ENCODE measurements at regions of chr1 and their contacts with region 1.

Region 1: GRCh38 chr1:155308493-155309422 is at the start of gene FDPS:
- DNase-seq: peak; percentile 96 to 99 (median 98)
- H3K4me3 ChIP-seq: peak within 1 kb of the TSS; percentile 92 to 97
- H3K4me3 Mint-ChIP-seq: peak within 1 kb of the TSS; percentile 92 to 99 (median 97)
- H3K27ac ChIP-seq: peak within 1 kb of the TSS; percentile 90
- H3K27ac Mint-ChIP-seq: peak within 1 kb of the TSS; percentile 88 to 99 (median 98)
- H3K4me1 ChIP-seq: peaks cover 22% of the 10 kb centered on the region
- H3K4me1 Mint-ChIP-seq: peaks cover 18 to 44% (median 25%) of the 10 kb centered on the region in 4 donors
- H3K27me3 ChIP-seq: no peaks in the 10 kb centered on the region
- H3K27me3 Mint-ChIP-seq: peaks cover 0 to 2% of the 10 kb centered on the region in 2 donors
- total RNA-seq, gene FDPS: 82.8 to 91.3 TPM

Region 2: GRCh38 chr1:155193275-155193990 is 115.3 kb before region 1 on chr1:
- CTCF ChIA-PET with region 1: no interaction called
- POLR2A ChIA-PET with region 1: interaction called, 3 read pairs
- intact Hi-C with region 1: loop called (anchors 5 kb)
- DNase-seq: peak; percentile 60 to 72 (median 62)
- H3K4me3 ChIP-seq: peak overlapping the region; percentile 58 to 73
- H3K4me3 Mint-ChIP-seq: peak overlapping the region; percentile 87 to 97 (median 92)
- H3K27ac ChIP-seq: peak overlapping the region; percentile 67
- H3K27ac Mint-ChIP-seq: peak overlapping the region; percentile 91 to 99 (median 98)
- H3K4me1 ChIP-seq: peaks cover 27% of the 10 kb centered on the region
- H3K4me1 Mint-ChIP-seq: peaks cover 19 to 38% (median 24%) of the 10 kb centered on the region in 4 donors
- H3K27me3 ChIP-seq: no peaks in the 10 kb centered on the region
- H3K27me3 Mint-ChIP-seq: no peaks in the 10 kb centered on the region

Region 3: GRCh38 chr1:155261852-155262673 is 46.7 kb before region 1 on chr1 and contains the start of gene SCAMP3:
- CTCF ChIA-PET with region 1: interaction called, 5 read pairs
- POLR2A ChIA-PET with region 1: interaction called, 9 read pairs
- intact Hi-C with region 1: loop called (anchors 1 kb)
- DNase-seq: peak; percentile 82 to 94 (median 84)
- H3K4me3 ChIP-seq: peak within 1 kb of the TSS; percentile 94
- H3K4me3 Mint-ChIP-seq: peak within 1 kb of the TSS; percentile 95 to 100 (median 99)
- H3K27ac ChIP-seq: peak within 1 kb of the TSS; percentile 86
- H3K27ac Mint-ChIP-seq: peak within 1 kb of the TSS; percentile 86 to 99 (median 97)
- H3K4me1 ChIP-seq: peaks cover 23% of the 10 kb centered on the region
- H3K4me1 Mint-ChIP-seq: peaks cover 12 to 40% (median 30%) of the 10 kb centered on the region in 4 donors
- H3K27me3 ChIP-seq: no peaks in the 10 kb centered on the region
- H3K27me3 Mint-ChIP-seq: no peaks in the 10 kb centered on the region
- total RNA-seq, gene SCAMP3: 94.4 to 101 TPM

Region 4: DNA sequence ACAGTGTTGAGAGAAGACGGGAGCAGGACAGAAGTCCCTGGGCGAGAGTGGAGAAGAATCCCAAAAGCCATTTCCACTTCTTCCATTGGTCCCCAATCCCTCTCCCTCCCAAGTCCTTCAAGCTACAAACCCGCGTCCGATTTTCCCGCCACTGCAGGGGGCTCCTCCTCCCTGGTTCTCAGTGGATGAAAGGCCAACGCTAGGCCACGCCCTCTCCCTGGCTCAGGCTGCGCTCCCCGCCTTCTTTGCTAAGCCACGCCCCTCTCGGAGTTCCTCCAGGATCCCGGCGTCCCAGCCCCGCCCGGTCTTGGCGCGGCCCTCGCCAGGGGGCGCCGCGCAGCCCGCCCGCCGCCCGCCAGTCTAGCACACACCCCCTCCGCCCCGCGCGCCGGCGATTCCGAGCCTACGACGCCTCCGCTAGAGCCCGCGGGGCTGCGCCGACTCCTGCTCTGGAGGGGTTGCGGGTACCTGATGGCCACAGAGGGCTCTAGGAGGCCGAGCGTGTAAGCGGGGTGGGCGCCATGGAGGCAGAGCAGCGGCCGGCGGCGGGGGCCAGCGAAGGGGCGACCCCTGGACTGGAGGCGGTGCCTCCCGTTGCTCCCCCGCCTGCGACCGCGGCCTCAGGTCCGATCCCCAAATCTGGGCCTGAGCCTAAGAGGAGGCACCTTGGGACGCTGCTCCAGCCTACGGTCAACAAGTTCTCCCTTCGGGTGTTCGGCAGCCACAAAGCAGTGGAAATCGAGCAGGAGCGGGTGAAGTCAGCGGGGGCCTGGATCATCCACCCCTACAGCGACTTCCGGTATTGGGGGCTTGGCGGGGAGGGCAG is 31.5 kb before region 1 on chr1 and contains the start of gene HCN3:
- CTCF ChIA-PET with region 1: interaction called, 6 read pairs
- POLR2A ChIA-PET with region 1: interaction called, 14 read pairs
- intact Hi-C with region 1: loop called (anchors 1 kb)
- DNase-seq: peak; percentile 80 to 90 (median 81)
- H3K4me3 ChIP-seq: peak within 1 kb of the TSS; percentile 62 to 81
- H3K4me3 Mint-ChIP-seq: peak within 1 kb of the TSS; percentile 78 to 86 (median 83)
- H3K27ac ChIP-seq: peak within 1 kb of the TSS; percentile 55
- H3K27ac Mint-ChIP-seq: peak within 1 kb of the TSS; percentile 42 to 91 (median 81)
- H3K4me1 ChIP-seq: peaks cover 35% of the 10 kb centered on the region
- H3K4me1 Mint-ChIP-seq: peaks cover 23 to 41% (median 32%) of the 10 kb centered on the region in 4 donors
- H3K27me3 ChIP-seq: no peaks in the 10 kb centered on the region
- H3K27me3 Mint-ChIP-seq: no peaks in the 10 kb centered on the region
- total RNA-seq, gene HCN3: 4.9 to 5.3 TPM

Region 5: DNA sequence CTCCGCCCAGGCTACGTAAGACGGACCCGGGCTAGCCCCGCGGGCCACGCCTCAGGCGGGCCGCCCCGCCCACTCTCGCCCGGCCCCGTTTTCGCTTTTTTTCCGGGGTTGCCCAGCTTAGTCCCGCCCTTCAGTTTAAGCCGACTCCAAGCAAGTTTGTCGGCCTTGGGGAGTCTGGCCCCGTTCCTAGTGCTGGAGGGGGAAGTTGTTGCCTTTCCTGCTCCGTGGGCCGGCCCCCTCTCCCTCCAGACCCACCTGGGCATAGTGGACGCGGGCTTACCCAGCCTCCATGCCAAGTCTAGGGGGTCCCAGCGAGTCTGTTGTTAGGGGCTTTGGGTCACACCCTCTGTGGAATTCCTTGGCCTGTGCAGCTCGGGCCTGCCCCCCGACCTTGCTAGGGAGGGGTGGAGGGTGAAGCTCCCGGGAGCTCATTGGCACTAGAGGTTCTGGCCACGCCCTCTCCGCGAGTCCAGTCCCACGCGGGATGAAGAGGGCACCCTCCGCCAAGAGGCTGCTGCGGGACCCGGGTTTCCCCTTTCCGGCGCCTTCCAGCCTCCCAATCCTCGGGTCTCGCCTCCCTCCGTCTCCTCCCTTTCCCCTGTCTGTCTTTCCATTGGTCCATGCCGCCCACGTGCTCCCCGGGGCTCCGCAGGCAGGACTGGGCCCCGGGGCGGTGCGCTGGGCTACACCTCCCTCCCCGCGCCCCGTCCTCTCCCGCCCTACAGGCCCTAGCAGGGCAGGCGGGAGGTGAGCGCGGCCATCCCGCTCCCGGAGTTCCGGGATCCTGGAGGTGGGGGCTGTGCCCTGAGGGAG is 15.2 kb after region 1 on chr1:
- CTCF ChIA-PET with region 1: interaction called, 14 read pairs
- POLR2A ChIA-PET with region 1: interaction called, 14 read pairs
- intact Hi-C with region 1: loop called (anchors 1 kb)
- DNase-seq: peak; percentile 83 to 93 (median 85)
- H3K4me3 ChIP-seq: peak overlapping the region; percentile 91 to 96
- H3K4me3 Mint-ChIP-seq: peak overlapping the region; percentile 70 to 91 (median 88)
- H3K27ac ChIP-seq: peak overlapping the region; percentile 96
- H3K27ac Mint-ChIP-seq: peak overlapping the region; percentile 82 to 93 (median 90)
- H3K4me1 ChIP-seq: peaks cover 31% of the 10 kb centered on the region
- H3K4me1 Mint-ChIP-seq: peaks cover 14 to 46% (median 29%) of the 10 kb centered on the region in 4 donors
- H3K27me3 ChIP-seq: no peaks in the 10 kb centered on the region
- H3K27me3 Mint-ChIP-seq: no peaks in the 10 kb centered on the region

Region 6: GRCh38 chr1:155466996-155467395 is 158.2 kb after region 1 on chr1:
- CTCF ChIA-PET with region 1: no interaction called
- POLR2A ChIA-PET with region 1: no interaction called
- intact Hi-C with region 1: no loop called
- DNase-seq: no peak
- H3K4me3 ChIP-seq: no peak overlapping the region
- H3K4me3 Mint-ChIP-seq: peak overlapping the region in 5 of 8 donors; percentile 31 to 84 (median 46)
- H3K27ac ChIP-seq: peak overlapping the region; percentile 44
- H3K27ac Mint-ChIP-seq: peak overlapping the region; percentile 10 to 98 (median 91)
- H3K4me1 ChIP-seq: peaks cover 30% of the 10 kb centered on the region
- H3K4me1 Mint-ChIP-seq: peaks cover 29 to 50% (median 39%) of the 10 kb centered on the region in 4 donors
- H3K27me3 ChIP-seq: no peaks in the 10 kb centered on the region
- H3K27me3 Mint-ChIP-seq: no peaks in the 10 kb centered on the region

Measured in CD4-positive, alpha-beta memory T cell (primary cell).